ENCODE measurements at regions of chr22 and their contacts with region 1.

Region 1: GRCh38 chr22:22195265-22196017 is 49.1 kb upstream of the VPREB1 start:
- DNase-seq: peak; percentile 45
- H3K4me3 ChIP-seq: no peak overlapping the region
- H3K27ac ChIP-seq: no peak overlapping the region
- H3K4me1 ChIP-seq: no peaks in the 10 kb centered on the region
- H3K27me3 ChIP-seq: peaks cover 0 to 4% of the 10 kb centered on the region in 2 experiments
- CTCF ChIP-seq: peak; percentile 81 to 87
- POLR2A ChIP-seq: no peak

Region 2: GRCh38 chr22:22037740-22038139 is 157.7 kb before region 1 on chr22:
- CTCF ChIA-PET with region 1: no interaction called
- POLR2A ChIA-PET with region 1: no interaction called
- dilution Hi-C with region 1: no loop called
- intact Hi-C with region 1: no loop called
- DNase-seq: peak; percentile 68
- H3K4me3 ChIP-seq: no peak overlapping the region
- H3K27ac ChIP-seq: no peak overlapping the region
- H3K4me1 ChIP-seq: no peaks in the 10 kb centered on the region
- H3K27me3 ChIP-seq: peaks cover 4 to 5% of the 10 kb centered on the region in 2 experiments
- CTCF ChIP-seq: no peak
- POLR2A ChIP-seq: no peak

Region 3: GRCh38 chr22:22123118-22123959 is 72.1 kb before region 1 on chr22:
- CTCF ChIA-PET with region 1: no interaction called
- POLR2A ChIA-PET with region 1: no interaction called
- dilution Hi-C with region 1: no loop called
- intact Hi-C with region 1: no loop called
- DNase-seq: no peak
- H3K4me3 ChIP-seq: no peak overlapping the region
- H3K27ac ChIP-seq: no peak overlapping the region
- H3K4me1 ChIP-seq: no peaks in the 10 kb centered on the region
- H3K27me3 ChIP-seq: peaks cover 3 to 9% of the 10 kb centered on the region in 2 experiments
- CTCF ChIP-seq: no peak
- POLR2A ChIP-seq: no peak

Region 4: DNA sequence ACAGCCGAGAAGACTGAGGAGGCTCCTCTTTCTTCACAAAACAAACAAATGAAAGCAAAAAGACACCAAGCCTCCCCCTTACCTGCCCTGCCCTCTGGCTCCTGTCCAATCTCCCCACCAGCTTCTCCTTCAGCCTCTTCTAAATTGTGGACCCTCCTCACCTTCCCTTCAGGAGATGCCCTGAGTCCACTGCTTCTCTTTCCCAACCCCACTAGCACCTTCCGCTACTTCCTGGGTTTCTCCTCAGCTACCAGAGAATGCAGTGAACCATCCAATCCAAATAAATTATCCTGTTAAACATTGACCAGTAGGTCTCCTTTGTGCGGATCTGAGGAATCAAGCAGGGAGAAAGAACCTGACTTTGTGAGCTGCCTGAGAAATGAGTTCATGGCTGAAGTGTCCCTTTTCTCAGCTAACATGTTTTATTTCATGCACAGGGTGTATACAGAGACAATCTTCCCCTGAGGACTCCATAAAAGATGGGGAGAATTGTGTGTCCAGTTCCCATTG is 14.0 kb before region 1 on chr22:
- CTCF ChIA-PET with region 1: interaction called, 66 read pairs
- POLR2A ChIA-PET with region 1: no interaction called
- dilution Hi-C with region 1: no loop called
- intact Hi-C with region 1: no loop called
- DNase-seq: no peak
- H3K4me3 ChIP-seq: no peak overlapping the region
- H3K27ac ChIP-seq: no peak overlapping the region
- H3K4me1 ChIP-seq: no peaks in the 10 kb centered on the region
- H3K27me3 ChIP-seq: peaks cover 6 to 40% of the 10 kb centered on the region in 2 experiments
- CTCF ChIP-seq: no peak
- POLR2A ChIP-seq: no peak

Region 5: GRCh38 chr22:22207845-22208564 is 12.6 kb after region 1 on chr22:
- CTCF ChIA-PET with region 1: interaction called, 15 read pairs
- POLR2A ChIA-PET with region 1: no interaction called
- dilution Hi-C with region 1: no loop called
- intact Hi-C with region 1: no loop called
- DNase-seq: peak; percentile 68
- H3K4me3 ChIP-seq: no peak overlapping the region
- H3K27ac ChIP-seq: no peak overlapping the region
- H3K4me1 ChIP-seq: peaks cover 11% of the 10 kb centered on the region
- H3K27me3 ChIP-seq: peaks cover 6 to 22% of the 10 kb centered on the region in 2 experiments
- CTCF ChIP-seq: peak; percentile 79 to 80
- POLR2A ChIP-seq: no peak

Region 6: DNA sequence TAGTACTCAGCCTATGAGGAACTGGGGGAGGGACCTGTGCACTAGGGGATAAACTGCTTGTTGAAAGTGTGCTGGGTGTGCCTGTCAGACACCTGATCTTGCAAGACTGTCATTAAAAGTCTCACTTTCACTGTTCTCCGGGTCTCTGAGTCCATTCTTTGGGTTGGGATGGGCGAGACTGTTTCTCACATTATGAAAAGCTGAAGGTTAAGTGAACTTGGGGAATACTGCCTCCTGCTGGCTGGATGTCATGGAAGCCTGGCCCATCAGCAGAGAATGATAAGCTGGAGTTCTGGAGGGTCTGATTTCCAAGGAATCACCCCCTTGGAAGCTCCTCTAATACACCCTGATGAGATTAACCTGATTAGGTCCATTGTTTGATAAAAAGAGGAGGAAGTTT is 40.1 kb after region 1 on chr22:
- CTCF ChIA-PET with region 1: interaction called, 22 read pairs
- POLR2A ChIA-PET with region 1: no interaction called
- dilution Hi-C with region 1: no loop called
- intact Hi-C with region 1: loop called (anchors 1 kb)
- DNase-seq: peak; percentile 22
- H3K4me3 ChIP-seq: no peak overlapping the region
- H3K27ac ChIP-seq: no peak overlapping the region
- H3K4me1 ChIP-seq: peaks cover 4% of the 10 kb centered on the region
- H3K27me3 ChIP-seq: no peaks in the 10 kb centered on the region
- CTCF ChIP-seq: peak; percentile 49 to 51
- POLR2A ChIP-seq: no peak

Region 7: GRCh38 chr22:22329792-22330191 is 134.4 kb after region 1 on chr22:
- CTCF ChIA-PET with region 1: no interaction called
- POLR2A ChIA-PET with region 1: no interaction called
- dilution Hi-C with region 1: no loop called
- intact Hi-C with region 1: no loop called
- DNase-seq: no peak
- H3K4me3 ChIP-seq: no peak overlapping the region
- H3K27ac ChIP-seq: no peak overlapping the region
- H3K4me1 ChIP-seq: no peaks in the 10 kb centered on the region
- H3K27me3 ChIP-seq: peaks cover 3 to 8% of the 10 kb centered on the region in 2 experiments
- CTCF ChIP-seq: no peak
- POLR2A ChIP-seq: no peak

Measured in endothelial cell of umbilical vein (primary cell).